ENCODE measurements at regions of chr4 and their contacts with region 1.

Region 1: DNA sequence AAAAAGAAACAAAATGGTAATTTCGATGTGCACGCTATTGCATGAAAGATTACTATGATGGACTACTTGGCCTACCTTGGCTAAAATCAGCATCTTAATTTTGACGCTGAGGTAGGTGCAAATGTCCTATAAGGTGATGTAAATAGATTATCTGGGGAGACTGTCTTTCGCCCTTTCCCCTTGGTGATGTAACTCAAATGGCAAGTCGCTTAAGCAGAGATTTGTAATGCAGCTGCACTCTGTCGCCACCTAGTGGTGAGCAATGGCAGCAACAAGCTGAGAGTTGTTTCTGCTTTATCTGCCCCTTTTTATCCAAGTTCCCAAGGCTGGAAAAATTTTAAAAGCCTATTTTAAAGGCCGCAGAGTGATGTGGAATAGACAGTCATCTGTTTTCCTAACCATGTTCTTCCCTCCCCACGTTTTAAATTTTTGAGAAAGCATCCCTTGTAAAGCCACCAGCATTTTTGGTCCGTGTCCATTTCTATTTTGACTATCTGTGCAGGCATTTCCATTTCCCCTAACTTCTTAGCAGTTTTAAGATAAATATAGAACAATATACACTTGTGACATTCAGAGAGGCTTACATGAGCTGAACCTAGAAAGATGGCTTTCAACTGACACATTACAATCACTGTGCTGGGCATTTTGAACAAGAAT is 62.4 kb upstream of the PDLIM3 start:
- DNase-seq: peak; percentile 35 to 64
- H3K4me3 ChIP-seq: no peak overlapping the region
- H3K27ac ChIP-seq: no peak overlapping the region
- H3K4me1 ChIP-seq: no peaks in the 10 kb centered on the region
- H3K27me3 ChIP-seq: no peaks in the 10 kb centered on the region
- CTCF ChIP-seq: peak; percentile 93

Region 2: DNA sequence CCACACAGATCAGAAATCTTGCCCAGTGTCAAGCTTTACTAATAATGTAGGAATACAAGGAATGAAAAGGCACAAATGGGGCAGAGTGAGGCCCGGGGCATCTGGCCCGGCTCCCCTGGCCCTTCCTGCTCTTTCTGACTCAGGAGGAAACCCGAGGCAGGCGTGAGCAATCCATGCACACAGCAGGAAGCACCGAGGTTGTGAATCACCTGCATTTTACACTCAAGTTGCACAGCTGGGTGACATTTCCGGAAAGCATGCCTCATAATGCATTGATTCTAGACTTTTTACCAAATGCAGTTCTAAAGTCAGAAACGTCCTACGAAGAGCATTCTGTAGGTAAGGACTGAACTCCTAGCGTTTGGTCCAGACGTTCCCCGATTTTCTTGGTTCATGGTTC is 909.2 kb before region 1 on chr4:
- CTCF ChIA-PET with region 1: interaction called, 12 read pairs
- POLR2A ChIA-PET with region 1: no interaction called
- intact Hi-C with region 1: no loop called
- DNase-seq: peak; percentile 71 to 88
- H3K4me3 ChIP-seq: no peak overlapping the region
- H3K27ac ChIP-seq: peak overlapping the region; percentile 81
- H3K4me1 ChIP-seq: peaks cover 17% of the 10 kb centered on the region
- H3K27me3 ChIP-seq: no peaks in the 10 kb centered on the region
- CTCF ChIP-seq: no peak

Region 3: GRCh38 chr4:185203486-185204237 is 394.0 kb before region 1 on chr4 and contains the start of gene CFAP97:
- CTCF ChIA-PET with region 1: no interaction called
- POLR2A ChIA-PET with region 1: no interaction called
- intact Hi-C with region 1: loop called (anchors 10 kb)
- DNase-seq: peak; percentile 49 to 78
- H3K4me3 ChIP-seq: peak within 1 kb of the TSS; percentile 75
- H3K27ac ChIP-seq: peak within 1 kb of the TSS; percentile 76
- H3K4me1 ChIP-seq: peaks cover 35% of the 10 kb centered on the region
- H3K27me3 ChIP-seq: no peaks in the 10 kb centered on the region
- CTCF ChIP-seq: no peak
- total RNA-seq, gene CFAP97: 33.4 and 48.2 TPM in 2 replicates

Region 4: DNA sequence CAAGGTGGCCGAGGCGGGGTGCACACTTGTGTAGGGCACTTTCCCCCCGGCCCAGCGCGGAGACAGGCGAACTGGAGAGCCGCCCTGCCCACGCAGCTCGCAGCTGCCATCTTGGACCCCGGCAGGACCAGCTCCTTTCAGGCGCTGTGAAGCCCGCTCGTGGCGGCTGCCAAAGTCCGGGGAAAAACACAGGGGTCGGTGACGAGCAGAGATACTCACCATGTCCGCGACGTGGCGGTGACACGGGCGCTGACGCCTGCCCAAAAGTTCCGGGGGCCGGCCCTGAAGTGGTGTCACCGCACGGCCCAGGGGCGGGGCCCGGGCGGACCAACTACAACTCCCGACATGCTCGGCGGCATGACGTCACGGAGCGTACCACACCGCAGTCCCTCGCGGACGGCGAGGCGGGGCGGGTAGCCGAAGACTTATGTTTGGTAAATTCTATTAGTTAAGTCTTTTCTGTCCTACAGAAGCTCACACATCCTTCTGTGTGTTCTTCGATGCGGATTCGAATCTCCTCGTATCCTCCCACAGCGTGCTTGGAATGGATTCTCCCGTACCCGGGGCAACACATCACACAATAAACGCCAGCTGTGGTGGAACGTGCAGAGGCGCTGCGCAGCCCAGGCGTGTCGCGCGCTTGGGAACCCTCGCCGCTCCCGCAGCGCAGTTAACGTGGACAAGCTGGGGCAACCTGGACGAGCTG is 171.9 kb before region 1 on chr4 and contains the start of gene UFSP2:
- CTCF ChIA-PET with region 1: no interaction called
- POLR2A ChIA-PET with region 1: no interaction called
- intact Hi-C with region 1: loop called (anchors 5 kb)
- DNase-seq: peak; percentile 59 to 81
- H3K4me3 ChIP-seq: peak within 1 kb of the TSS; percentile 82
- H3K27ac ChIP-seq: peak within 1 kb of the TSS; percentile 77
- H3K4me1 ChIP-seq: peaks cover 10% of the 10 kb centered on the region
- H3K27me3 ChIP-seq: no peaks in the 10 kb centered on the region
- CTCF ChIP-seq: no peak
- total RNA-seq, gene UFSP2: 22.7 and 26.8 TPM in 2 replicates

Region 5: GRCh38 chr4:185471235-185472102 is 126.2 kb before region 1 on chr4 and contains the start of gene CCDC110:
- CTCF ChIA-PET with region 1: interaction called, 3 read pairs
- POLR2A ChIA-PET with region 1: no interaction called
- intact Hi-C with region 1: loop called (anchors 1 kb)
- DNase-seq: peak; percentile 46 to 91
- H3K4me3 ChIP-seq: peak within 1 kb of the TSS; percentile 73
- H3K27ac ChIP-seq: no peak within 1 kb of the TSS
- H3K4me1 ChIP-seq: 0 out of 2 replicates have a peak, but pooled peaks cover 4% of the 10 kb centered on the region
- H3K27me3 ChIP-seq: no peaks in the 10 kb centered on the region
- CTCF ChIP-seq: peak; percentile 52; the same call in 1 of the 2 replicates
- total RNA-seq, gene CCDC110: 2.1 and 4.3 TPM in 2 replicates

Region 6: GRCh38 chr4:185559913-185560281 is 37.8 kb before region 1 on chr4:
- CTCF ChIA-PET with region 1: interaction called, 4 read pairs
- POLR2A ChIA-PET with region 1: interaction called, 22 read pairs
- intact Hi-C with region 1: no loop called
- DNase-seq: peak; percentile 78 to 90
- H3K4me3 ChIP-seq: no peak overlapping the region
- H3K27ac ChIP-seq: peak overlapping the region; percentile 73
- H3K4me1 ChIP-seq: peaks cover 16% of the 10 kb centered on the region
- H3K27me3 ChIP-seq: no peaks in the 10 kb centered on the region
- CTCF ChIP-seq: no peak

Region 7: GRCh38 chr4:186137196-186137794 is 539.6 kb after region 1 on chr4:
- CTCF ChIA-PET with region 1: interaction called, 20 read pairs
- POLR2A ChIA-PET with region 1: no interaction called
- intact Hi-C with region 1: loop called (anchors 1 kb)
- DNase-seq: no peak
- H3K4me3 ChIP-seq: no peak overlapping the region
- H3K27ac ChIP-seq: no peak overlapping the region
- H3K4me1 ChIP-seq: no peaks in the 10 kb centered on the region
- H3K27me3 ChIP-seq: no peaks in the 10 kb centered on the region
- CTCF ChIP-seq: peak; percentile 63